Head of caudate nucleus (tissue), 42 donors: ENCODE measurements at regions of chr6 and their contacts with region 1.

Region 1: GRCh38 chr6:168866534-168866933 is 387.1 kb downstream of the THBS2 start:
- DNase-seq: peak in 3 of 42 donors; percentile 7 to 32 (median 22)

Region 2: GRCh38 chr6:168741942-168742782 is 124.4 kb before region 1 on chr6:
- intact Hi-C with region 1: no loop called
- DNase-seq: peak in 23 of 42 donors; percentile 8 to 57 (median 27)

Region 3: DNA sequence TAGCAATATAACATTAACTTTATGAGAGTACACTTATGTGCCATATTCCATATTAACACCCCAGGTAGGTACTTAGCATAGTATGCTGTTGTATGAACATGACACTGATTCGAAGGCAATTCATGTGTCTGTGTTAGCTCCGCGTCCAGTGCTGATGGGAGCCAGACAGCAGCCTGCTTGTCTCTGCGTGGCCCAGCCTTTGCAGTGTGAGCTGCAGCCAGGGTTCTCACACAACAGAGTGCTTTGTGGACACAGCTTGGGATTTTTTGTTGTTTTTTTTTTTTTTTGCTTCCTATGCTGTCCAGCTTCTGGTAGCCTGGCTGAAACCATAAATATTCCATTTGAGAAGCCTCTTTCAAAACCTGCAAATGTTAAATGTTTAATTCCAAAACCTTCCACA is 74.6 kb before region 1 on chr6:
- intact Hi-C with region 1: loop called (anchors 10 kb)
- DNase-seq: peak in 41 of 42 donors; percentile 28 to 85 (median 73)

Region 4: GRCh38 chr6:168916576-168917207 is 50.2 kb after region 1 on chr6:
- intact Hi-C with region 1: no loop called
- DNase-seq: peak in 5 of 42 donors; percentile 7 to 45 (median 13)